Ascending aorta (tissue), 2 donors: ENCODE measurements at regions of chr7 and their contacts with region 1.

Region 1: DNA sequence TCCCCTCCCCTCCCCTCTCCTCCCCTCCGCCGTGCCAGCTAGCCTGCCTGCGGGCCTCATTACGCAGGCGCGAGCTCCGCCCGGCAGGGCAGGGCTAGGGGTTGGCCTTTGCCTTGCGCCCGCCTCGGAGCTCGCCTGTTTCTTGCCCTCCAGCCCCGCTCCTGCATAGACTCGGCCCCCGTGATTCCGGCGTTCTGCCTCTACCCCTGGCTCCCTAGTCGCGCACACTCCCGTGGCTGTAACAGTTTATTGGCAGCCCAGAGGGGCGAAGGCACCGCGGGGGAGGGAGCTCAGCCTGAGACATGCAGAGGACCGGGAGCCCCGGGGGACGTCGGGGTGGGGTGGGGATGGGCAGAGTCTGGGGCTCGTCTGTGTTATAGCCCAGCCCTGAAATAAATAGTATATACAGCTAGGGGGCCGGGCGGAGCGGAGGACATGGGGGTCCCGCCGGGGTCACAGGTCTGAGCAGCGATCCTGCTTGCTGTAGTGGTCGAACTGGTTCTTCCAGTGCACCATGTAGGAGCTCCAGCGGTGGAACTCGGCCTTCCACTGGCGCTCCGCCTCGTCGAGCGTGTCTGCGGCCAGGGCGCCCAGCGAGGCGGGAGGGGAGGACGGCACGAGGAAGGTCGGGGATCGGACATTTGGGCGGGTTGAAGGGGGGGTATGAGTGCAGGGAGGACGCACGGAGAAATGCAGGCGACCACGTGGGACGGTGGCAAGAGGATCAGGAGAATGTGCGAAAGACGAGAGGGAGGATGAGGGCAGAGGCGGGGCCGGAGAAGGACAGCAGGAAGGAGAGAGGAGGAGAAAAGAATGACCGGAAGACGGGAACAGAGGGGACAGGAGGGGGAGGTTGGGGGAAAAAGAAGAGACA is 483 bp upstream of the UFSP1 start:
- DNase-seq: peak; percentile 56 to 96
- H3K4me3 ChIP-seq: peak overlapping the region; percentile 70 to 74
- H3K27ac ChIP-seq: peak overlapping the region; percentile 76 to 79
- H3K4me1 ChIP-seq: peaks cover 6 to 17% of the 10 kb centered on the region in 2 donors
- H3K27me3 ChIP-seq: no peaks in the 10 kb centered on the region
- CTCF ChIP-seq: no peak

Region 2: DNA sequence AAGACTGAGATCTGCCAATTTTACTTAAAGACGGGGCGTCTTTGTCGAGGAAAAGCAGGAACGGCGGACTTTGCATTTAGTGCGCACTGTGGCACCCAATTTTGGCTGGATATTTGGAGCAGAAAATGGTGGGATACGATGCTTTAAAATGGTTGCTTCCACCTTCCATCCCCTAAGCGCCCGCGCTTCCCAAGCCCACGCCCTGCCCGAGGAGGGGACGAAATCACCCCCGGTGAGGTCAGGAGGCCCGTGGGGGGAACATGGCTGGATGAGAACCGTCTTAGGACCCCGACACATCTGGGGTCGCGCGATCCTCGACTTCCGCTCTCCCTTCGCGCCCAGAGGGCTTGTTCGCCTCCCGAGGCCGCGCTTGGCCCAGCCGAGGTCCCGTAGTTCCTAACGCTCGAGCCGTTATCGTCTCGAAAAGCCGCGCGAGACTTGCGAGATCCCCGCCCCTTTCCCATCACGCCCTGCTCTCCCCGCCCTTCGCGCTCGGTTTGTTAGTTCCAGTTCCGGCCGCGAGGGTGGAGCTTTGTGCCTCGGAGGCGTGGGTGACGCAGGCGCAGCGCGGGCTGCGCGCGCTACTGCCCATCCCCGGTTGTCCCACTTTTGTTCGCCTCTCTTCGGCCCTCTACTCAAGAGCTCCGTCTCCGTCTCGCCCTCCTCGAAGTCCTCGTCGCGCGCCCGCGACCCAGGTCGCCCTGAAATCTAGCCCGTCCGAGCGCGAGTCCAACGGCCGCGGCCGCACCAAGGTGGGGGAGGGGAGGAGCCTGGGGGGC is 15.2 kb before region 1 on chr7 and contains the start of gene SRRT:
- intact Hi-C with region 1: loop called (anchors 1 kb)
- DNase-seq: peak; percentile 88 to 99
- H3K4me3 ChIP-seq: peak within 1 kb of the TSS; percentile 91 to 98
- H3K27ac ChIP-seq: peak within 1 kb of the TSS; percentile 88 to 98
- H3K4me1 ChIP-seq: peaks cover 13 to 33% of the 10 kb centered on the region in 2 donors
- H3K27me3 ChIP-seq: no peaks in the 10 kb centered on the region
- CTCF ChIP-seq: peak in 2 of 3 experiments; percentile 41 to 82
- total RNA-seq, gene SRRT: 89.2 TPM

Region 3: DNA sequence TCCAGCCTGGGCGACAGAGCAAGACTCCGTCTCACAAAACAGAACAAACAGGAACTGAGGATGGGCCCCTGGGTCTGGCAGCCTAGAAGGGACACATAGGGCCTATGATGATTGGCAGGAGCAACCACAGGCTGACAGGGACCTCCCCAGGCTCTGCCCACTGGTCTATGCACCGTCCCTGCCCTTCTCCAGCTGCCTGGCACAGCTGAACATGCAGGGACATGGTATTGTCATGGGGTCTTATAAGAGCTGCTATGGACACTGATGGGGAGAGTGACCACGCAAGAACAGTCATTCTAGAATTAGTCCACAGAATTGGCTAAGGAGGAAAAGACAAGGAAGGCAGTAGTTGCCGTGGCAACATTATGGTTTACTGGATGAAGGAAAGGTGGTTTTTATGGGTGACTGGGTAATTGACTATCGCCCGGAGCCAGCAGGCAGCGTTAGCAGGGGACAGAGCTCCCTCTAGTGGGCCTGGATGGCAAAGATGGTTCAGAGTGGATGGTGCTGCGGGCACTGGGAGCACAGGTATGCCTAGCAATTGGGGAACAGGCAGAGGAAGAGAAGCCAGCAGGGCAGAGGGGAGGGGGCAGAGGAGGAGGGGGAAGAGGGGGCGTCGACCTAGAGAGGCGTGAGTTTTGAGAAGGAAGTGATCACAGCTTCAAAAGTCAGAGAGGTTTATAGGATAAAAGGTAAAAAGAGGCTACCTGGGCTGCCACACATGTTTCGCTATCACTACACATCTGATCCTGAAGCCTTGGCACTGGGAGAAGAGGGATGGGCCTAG is 187.5 kb after region 1 on chr7:
- intact Hi-C with region 1: loop called (anchors 5 kb)
- DNase-seq: peak in 1 of 2 donors; percentile 86
- H3K4me3 ChIP-seq: no peak overlapping the region
- H3K27ac ChIP-seq: no peak overlapping the region
- H3K4me1 ChIP-seq: no peaks in the 10 kb centered on the region
- H3K27me3 ChIP-seq: no peaks in the 10 kb centered on the region
- CTCF ChIP-seq: peak; percentile 77 to 90 (median 87)

Region 4: DNA sequence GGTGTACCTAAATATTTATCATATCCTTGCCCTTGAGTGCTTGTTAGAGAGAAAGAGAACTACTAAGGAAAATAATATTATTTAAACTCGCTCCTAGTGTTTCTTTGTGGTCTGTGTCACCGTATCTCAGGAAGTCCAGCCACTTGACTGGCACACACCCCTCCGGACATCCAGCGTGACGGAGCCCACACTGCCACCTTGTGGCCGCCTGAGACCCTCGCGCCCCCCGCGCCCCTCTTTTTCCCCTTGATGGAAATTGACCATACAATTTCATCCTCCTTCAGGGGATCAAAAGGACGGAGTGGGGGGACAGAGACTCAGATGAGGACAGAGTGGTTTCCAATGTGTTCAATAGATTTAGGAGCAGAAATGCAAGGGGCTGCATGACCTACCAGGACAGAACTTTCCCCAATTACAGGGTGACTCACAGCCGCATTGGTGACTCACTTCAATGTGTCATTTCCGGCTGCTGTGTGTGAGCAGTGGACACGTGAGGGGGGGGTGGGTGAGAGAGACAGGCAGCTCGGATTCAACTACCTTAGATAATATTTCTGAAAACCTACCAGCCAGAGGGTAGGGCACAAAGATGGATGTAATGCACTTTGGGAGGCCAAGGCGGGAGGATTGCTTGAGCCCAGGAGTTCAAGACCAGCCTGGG is 248.3 kb after region 1 on chr7:
- intact Hi-C with region 1: loop called (anchors 5 kb)
- DNase-seq: peak; percentile 91 to 98
- H3K4me3 ChIP-seq: peak overlapping the region in 1 of 2 donors; percentile 13
- H3K27ac ChIP-seq: peak overlapping the region; percentile 72 to 87
- H3K4me1 ChIP-seq: peaks cover 6 to 15% of the 10 kb centered on the region in 2 donors
- H3K27me3 ChIP-seq: no peaks in the 10 kb centered on the region
- CTCF ChIP-seq: peak; percentile 82 to 90 (median 85)

Region 5: GRCh38 chr7:101217388-101218235 is 327.6 kb after region 1 on chr7 and contains the starts of genes PLOD3 and ZNHIT1:
- intact Hi-C with region 1: loop called (anchors 5 kb)
- DNase-seq: peak; percentile 84 to 98
- H3K4me3 ChIP-seq: peak within 1 kb of the TSS; percentile 72 to 78
- H3K27ac ChIP-seq: peak within 1 kb of the TSS; percentile 55 to 78
- H3K4me1 ChIP-seq: peaks cover 9 to 18% of the 10 kb centered on the region in 2 donors
- H3K27me3 ChIP-seq: no peaks in the 10 kb centered on the region
- CTCF ChIP-seq: no peak
- total RNA-seq, gene PLOD3: 165 TPM
- total RNA-seq, gene ZNHIT1: 87.9 TPM

Region 6: GRCh38 chr7:101244375-101245146 is 354.6 kb after region 1 on chr7 and contains the start of gene FIS1:
- intact Hi-C with region 1: loop called (anchors 10 kb)
- DNase-seq: peak; percentile 76 to 95
- H3K4me3 ChIP-seq: peak within 1 kb of the TSS; percentile 77 to 94
- H3K27ac ChIP-seq: peak within 1 kb of the TSS; percentile 95 to 97
- H3K4me1 ChIP-seq: peaks cover 0 to 14% of the 10 kb centered on the region in 2 donors
- H3K27me3 ChIP-seq: no peaks in the 10 kb centered on the region
- CTCF ChIP-seq: peak; percentile 92 to 95 (median 95)
- total RNA-seq, gene FIS1: 266 TPM